Common myeloid progenitor, CD34-positive (primary cell): ENCODE measurements at regions of chr11 and their contacts with region 1.

Region 1: DNA sequence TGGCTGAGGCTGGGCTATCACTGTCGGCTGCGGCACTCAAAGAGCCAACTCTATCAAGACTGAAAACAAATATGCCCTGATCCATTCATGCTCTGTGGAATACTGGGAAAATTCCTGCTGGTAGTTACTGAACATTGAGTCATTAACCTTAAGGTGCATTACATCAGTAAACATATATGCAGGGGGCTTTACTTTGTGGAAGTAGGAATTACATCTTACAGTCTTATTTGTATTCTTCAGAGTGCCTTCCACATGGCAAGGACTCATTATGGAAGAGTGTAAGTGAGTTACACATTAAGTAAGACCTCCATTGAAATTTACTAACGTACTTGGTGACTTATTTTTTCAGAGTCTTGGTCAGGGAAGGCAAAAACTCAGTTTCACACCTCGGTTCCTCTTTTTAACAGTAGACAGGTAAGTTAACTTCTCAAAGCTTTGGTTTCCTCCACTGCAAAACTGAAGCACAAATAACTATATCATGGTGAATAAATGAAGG is 4.5 kb downstream of the OR5B21 start:
- DNase-seq: no peak
- H3K4me3 ChIP-seq: no peak overlapping the region
- H3K27ac ChIP-seq: no peak overlapping the region
- H3K4me1 ChIP-seq: peaks cover 0 to 9% (median 3%) of the 10 kb centered on the region in 4 experiments
- H3K27me3 ChIP-seq: no peaks in the 10 kb centered on the region

Region 2: GRCh38 chr11:57873196-57873911 is 630.1 kb before region 1 on chr11:
- CTCF ChIA-PET with region 1: no interaction called
- POLR2A ChIA-PET with region 1: no interaction called
- DNase-seq: peak in 2 of 3 donors; percentile 1 to 17
- H3K4me3 ChIP-seq: no peak overlapping the region
- H3K27ac ChIP-seq: no peak overlapping the region
- H3K4me1 ChIP-seq: no peaks in the 10 kb centered on the region
- H3K27me3 ChIP-seq: no peaks in the 10 kb centered on the region

Region 3: GRCh38 chr11:58391879-58392278 is 111.5 kb before region 1 on chr11:
- CTCF ChIA-PET with region 1: no interaction called
- POLR2A ChIA-PET with region 1: no interaction called
- DNase-seq: no peak
- H3K4me3 ChIP-seq: no peak overlapping the region
- H3K27ac ChIP-seq: no peak overlapping the region
- H3K4me1 ChIP-seq: no peaks in the 10 kb centered on the region
- H3K27me3 ChIP-seq: peaks cover 0 to 4% (median 0%) of the 10 kb centered on the region in 5 experiments

Region 4: DNA sequence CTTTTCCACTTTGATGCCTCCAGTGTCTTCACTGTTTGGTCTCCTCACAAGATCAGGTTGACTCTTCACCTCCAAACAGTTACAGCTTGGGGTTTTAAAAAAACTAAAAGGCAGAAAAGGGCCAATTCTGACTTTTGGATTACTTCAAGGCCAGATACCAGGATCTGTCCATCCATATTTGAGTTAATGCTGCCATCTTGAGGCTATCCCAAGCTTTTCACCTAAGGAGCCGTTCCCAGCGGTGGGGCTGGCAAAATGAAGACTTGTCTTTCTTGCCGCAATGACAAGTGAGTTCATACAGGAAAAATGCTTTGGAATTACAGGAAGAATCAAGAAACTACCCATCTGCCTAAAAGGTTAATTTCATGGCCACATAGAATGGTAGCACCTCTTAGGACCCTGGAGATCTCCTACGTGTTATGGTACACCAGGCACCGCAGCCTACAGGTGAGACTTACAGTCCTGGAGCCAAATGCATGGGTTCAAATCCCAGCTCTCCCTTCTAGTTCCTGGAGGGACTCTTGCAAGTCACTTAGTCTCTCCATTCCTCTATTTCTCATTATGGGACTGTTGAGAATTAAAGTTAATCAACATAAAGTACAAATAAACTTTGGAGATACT is 10.4 kb after region 1 on chr11:
- CTCF ChIA-PET with region 1: interaction called, 10 read pairs
- POLR2A ChIA-PET with region 1: no interaction called
- DNase-seq: peak; percentile 57 to 71 (median 61)
- H3K4me3 ChIP-seq: no peak overlapping the region
- H3K27ac ChIP-seq: no peak overlapping the region
- H3K4me1 ChIP-seq: no peaks in the 10 kb centered on the region
- H3K27me3 ChIP-seq: no peaks in the 10 kb centered on the region

Region 5: DNA sequence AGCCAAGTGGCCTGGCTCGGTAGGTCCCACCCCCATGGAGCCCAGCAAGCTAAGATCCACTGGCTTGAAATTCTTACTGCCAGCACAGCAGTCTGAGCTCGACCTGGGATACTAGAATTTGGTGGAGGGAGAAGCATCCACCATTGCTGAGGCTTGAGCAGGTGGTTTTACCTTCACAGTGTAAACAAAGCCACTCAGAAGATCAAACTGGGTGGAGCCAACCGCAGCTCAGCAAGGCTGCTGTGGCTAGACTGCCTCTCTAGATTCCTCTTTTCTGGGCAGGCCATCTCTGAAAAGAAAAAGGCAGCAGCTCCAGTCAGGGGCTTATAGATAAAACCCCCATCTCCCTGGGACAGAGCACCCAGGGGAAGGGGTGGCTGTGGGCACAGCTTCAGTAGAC is 26.8 kb after region 1 on chr11:
- CTCF ChIA-PET with region 1: no interaction called
- POLR2A ChIA-PET with region 1: no interaction called
- DNase-seq: peak in 1 of 3 donors; percentile 20
- H3K4me3 ChIP-seq: no peak overlapping the region
- H3K27ac ChIP-seq: no peak overlapping the region
- H3K4me1 ChIP-seq: peaks cover 4 to 22% (median 12%) of the 10 kb centered on the region in 4 experiments
- H3K27me3 ChIP-seq: no peaks in the 10 kb centered on the region